ENCODE measurements at regions of chr3 and their contacts with region 1.

Region 1: DNA sequence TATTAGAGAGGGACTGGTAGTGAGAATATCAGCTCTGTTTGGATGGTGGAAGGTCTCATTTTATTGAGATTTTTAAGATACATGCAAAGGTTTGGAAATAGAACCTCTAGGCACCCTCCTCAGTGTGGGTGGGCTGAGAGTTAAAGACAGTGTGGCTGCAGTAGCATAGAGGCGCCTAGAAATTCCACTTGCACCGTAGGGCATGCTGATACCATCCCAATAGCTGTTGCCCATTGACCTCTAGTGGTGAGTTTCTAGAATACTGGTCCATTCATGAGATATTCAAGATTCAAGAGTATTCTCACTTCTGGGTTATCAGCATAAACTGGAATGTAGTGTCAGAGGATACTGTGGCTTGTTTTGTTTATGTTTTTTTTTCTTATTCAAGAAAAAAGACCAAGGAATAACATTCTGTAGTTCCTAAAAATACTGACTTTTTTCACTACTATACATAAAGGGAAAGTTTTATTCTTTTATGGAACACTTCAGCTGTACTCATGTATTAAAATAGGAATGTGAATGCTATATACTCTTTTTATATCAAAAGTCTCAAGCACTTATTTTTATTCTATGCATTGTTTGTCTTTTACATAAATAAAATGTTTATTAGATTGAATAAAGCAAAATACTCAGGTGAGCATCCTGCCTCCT is 87.2 kb downstream of the TGFBR2 start:
- ATAC-seq: peak; percentile 51 to 98 (median 88)
- H3K4me3 ChIP-seq: no peak overlapping the region
- H3K27ac ChIP-seq: no peak overlapping the region
- H3K4me1 ChIP-seq: no peaks in the 10 kb centered on the region

Region 2: GRCh38 chr3:30112902-30113484 is 580.6 kb before region 1 on chr3:
- in situ Hi-C with region 1: loop called in 1 of 9 experiments (anchors 10 kb)
- ATAC-seq: peak in 3 of 8 experiments; percentile 61 to 79 (median 63)
- H3K4me3 ChIP-seq: no peak overlapping the region
- H3K27ac ChIP-seq: no peak overlapping the region
- H3K4me1 ChIP-seq: peaks cover 0 to 3% of the 10 kb centered on the region in 2 donors

Region 3: GRCh38 chr3:30567139-30567753 is 126.3 kb before region 1 on chr3:
- in situ Hi-C with region 1: no loop called
- ATAC-seq: no peak
- H3K4me3 ChIP-seq: no peak overlapping the region
- H3K27ac ChIP-seq: no peak overlapping the region
- H3K4me1 ChIP-seq: no peaks in the 10 kb centered on the region

Measured in motor neuron (in vitro differentiated cells).